Lower leg skin (tissue), 4 donors: ENCODE measurements at regions of chr20 and their contacts with region 1.

Region 1: DNA sequence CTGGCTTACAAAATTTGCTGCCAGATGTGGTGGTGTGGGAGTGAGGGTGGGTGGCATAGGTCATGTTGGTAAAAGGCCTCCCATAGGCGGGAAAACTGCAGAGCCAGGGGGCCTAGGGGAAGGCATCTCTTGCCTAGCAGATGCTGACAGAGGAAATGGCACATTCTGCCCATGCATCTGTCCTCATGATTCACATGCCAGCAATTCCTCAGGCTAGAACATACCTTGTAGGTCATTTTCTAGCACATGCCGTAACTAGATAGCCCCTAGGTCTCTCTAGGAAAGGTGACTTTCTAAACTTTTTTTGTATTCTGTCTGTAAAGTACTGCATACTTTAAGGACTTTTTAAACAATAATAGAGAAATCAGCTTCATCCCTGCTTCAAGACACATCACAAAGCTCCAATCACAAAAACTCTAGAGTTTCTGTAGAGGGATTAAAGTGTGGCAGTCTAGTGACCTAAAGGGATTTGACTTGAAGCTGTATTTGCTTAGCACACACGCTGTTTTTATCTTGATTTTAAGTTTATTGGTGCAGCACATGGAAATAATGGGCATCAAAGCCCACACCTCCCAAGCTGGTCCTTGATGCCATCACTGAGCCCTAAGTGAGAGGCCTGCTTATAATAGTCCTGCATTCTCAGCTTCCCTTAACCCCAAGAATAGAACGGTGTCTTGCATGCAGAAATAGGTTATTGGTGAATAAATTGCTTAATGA is 55.2 kb downstream of the ANKEF1 start:
- DNase-seq: no peak
- H3K4me3 ChIP-seq: no peak overlapping the region
- CTCF ChIP-seq: no peak
- POLR2A ChIP-seq: no peak

Region 2: DNA sequence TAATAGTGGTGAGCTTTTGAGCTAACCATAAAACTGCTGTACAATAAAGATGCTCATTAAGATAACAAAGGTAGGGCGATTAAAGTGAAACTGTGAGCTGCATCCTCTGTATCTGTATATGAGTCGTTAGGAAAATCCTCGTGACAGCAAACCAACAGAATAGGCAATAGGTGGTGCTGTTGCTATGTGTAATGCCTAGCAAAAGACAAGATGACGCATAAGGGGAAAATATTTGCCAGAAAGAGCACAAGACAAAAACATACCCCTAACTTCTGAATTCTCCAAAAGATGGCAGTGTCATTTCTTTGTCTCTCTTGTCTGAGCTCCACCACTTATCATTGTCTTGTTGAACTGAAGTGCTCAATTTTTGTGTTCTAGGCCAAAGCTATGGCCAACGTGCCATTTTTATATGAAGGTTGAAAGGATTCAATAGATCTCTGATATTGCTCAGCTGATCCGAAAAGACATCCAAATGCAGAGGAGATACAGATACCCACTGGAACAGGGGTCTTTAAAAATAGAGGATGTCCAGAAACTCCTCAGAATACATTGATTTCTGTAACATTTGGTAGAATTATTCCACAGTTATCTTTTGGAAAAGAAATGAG is 111.5 kb before region 1 on chr20:
- intact Hi-C with region 1: loop called (anchors 2 kb)
- DNase-seq: peak in 1 of 2 donors; percentile 66
- H3K4me3 ChIP-seq: no peak overlapping the region
- CTCF ChIP-seq: peak in 1 of 3 donors; percentile 53
- POLR2A ChIP-seq: no peak

Region 3: DNA sequence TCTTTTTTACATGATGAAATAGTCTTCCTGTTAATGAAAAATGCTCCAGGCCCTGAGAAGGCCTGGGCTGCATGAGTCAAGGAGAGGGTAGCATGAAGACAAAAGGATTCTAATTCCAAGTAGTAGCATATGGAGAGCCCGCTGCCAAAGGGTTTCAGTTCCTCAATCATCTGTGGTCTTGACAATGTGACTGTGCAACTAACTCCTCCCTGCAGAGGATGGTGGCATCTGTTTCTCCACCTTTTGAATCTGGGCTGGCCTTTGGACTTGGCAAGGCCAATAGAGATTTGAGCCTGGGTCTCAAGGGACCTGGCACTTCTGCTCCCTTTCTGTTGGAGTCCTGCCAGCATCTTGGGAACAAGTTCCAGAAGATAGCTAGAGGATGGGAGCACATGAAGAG is 90.4 kb before region 1 on chr20:
- intact Hi-C with region 1: loop called (anchors 5 kb)
- DNase-seq: peak in 1 of 2 donors; percentile 23
- H3K4me3 ChIP-seq: no peak overlapping the region
- CTCF ChIP-seq: no peak
- POLR2A ChIP-seq: no peak